Dorsolateral prefrontal cortex (tissue), 120 donors: ENCODE measurements at regions of chr2 and their contacts with region 1.

Region 1: DNA sequence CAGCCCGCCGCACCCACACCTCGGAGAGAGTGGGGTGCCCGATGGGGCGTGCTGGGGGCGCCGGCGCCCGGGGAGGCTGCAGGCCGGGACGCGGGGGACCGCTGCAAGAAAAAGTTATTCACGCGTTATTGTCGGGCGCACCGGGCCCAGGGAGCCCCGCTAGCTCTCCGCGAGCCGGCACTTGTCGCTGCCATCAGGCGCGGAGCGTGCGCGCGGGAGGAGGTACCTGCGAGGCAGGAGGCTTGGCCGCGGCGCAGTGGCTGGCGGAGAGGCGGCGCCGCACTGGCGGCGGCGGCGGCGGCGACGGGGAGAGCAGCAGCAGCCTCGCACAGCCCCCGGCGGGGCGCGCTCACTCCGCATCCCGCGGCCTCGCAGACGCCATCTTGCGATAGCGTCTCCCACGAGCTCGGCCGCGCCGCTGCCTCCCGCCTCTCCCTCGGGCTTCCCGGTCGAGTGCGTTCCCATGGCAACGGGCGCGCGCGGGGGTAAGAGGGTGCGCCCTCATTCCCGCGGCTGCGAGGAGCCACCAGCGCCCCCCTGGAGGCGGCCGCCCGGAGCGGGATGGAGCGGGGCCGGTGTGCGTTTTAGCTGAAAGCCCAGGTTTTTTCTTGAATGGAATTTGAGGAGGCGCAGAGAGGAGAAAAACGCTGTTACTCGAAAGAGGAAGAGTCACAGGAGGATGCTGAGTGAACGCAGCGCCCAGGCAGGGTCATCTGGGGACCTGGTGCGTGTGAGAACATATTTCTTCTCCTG is at the start of gene CHN1:
- DNase-seq: peak; percentile 70 to 92 (median 86)
- H3K4me3 ChIP-seq: peak within 1 kb of the TSS; percentile 53 to 97 (median 84)
- H3K27ac ChIP-seq: peak within 1 kb of the TSS in 55 of 59 donors; percentile 29 to 92 (median 83)
- H3K27me3 ChIP-seq: no peaks in the 10 kb centered on the region
- CTCF ChIP-seq: peak in 52 of 56 donors; percentile 2 to 73 (median 47)
- total RNA-seq, gene CHN1: 295 to 1,415 (median 1,032) TPM

Region 2: DNA sequence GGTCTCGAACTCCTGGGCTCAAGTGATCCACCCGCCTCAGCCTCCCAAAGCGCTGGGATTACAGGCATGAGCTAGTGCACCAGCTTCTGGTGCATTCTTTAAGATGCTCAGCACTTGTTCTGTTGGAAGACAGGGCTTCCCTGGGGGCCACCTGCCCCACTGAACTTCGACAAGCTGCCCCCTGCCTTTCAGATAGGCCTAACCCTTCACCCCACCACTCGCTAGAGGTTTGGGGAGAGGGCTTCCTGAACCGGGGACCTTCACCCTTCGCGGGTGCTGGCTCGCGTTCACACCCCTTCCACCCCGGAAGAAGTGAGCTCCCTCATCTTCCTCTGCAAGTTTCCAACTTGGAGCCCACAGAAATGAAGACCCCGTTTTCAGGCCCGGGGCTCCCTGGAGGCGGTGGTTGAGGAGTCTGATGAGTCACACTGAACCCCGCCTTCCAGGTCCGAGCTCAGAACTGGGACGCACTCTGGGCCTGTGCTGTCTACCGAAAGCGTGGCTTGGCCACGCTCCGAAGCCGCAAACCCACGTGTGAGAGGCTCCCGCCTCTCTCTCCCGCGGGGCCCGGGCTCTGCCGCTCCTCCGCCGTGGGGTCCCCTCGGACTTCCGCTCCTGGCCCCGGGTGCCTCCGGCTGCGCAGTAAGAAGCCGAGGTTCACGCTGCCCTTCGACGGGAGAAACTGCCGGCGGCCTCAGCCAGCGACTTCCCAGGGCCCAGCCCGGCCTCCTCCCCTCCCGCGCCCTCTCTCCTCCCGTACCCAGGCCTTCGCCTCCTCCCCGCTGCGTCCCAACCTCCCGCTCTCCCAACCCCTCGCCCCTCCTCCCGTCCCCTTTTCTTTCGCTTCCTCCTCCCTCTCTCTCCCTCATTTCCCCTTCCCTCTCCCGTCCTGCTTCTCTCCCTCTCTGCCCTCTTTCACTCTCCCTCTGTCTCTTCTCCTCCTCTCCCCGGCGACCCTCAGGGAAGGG is 992.5 kb before region 1 on chr2:
- intact Hi-C with region 1: no loop called
- DNase-seq: peak in 1 of 10 donors; percentile 53
- H3K4me3 ChIP-seq: peak overlapping the region; percentile 16 to 75 (median 60)
- H3K27ac ChIP-seq: peak overlapping the region in 57 of 59 donors; percentile 7 to 90 (median 71)
- H3K27me3 ChIP-seq: peaks cover 0 to 10% (median 0%) of the 10 kb centered on the region in 45 donors
- CTCF ChIP-seq: no peak

Region 3: GRCh38 chr2:175103191-175103590 is 98.0 kb after region 1 on chr2:
- intact Hi-C with region 1: loop called in 1 of 2 experiments (anchors 10 kb)
- DNase-seq: peak in 1 of 10 donors; percentile 5
- H3K4me3 ChIP-seq: no peak overlapping the region
- H3K27ac ChIP-seq: no peak overlapping the region
- H3K27me3 ChIP-seq: no peaks in the 10 kb centered on the region
- CTCF ChIP-seq: no peak

Region 4: GRCh38 chr2:175167792-175168563 is 162.8 kb after region 1 on chr2 and contains the start of gene ATF2:
- intact Hi-C with region 1: loop called (anchors 10 kb)
- DNase-seq: peak; percentile 74 to 98 (median 96)
- H3K4me3 ChIP-seq: peak within 1 kb of the TSS; percentile 49 to 100 (median 95)
- H3K27ac ChIP-seq: peak within 1 kb of the TSS; percentile 64 to 99 (median 94)
- H3K27me3 ChIP-seq: no peaks in the 10 kb centered on the region
- CTCF ChIP-seq: peak in 21 of 56 donors; percentile 3 to 34 (median 15)
- total RNA-seq, gene ATF2: 70.3 to 129 (median 104) TPM

Region 5: DNA sequence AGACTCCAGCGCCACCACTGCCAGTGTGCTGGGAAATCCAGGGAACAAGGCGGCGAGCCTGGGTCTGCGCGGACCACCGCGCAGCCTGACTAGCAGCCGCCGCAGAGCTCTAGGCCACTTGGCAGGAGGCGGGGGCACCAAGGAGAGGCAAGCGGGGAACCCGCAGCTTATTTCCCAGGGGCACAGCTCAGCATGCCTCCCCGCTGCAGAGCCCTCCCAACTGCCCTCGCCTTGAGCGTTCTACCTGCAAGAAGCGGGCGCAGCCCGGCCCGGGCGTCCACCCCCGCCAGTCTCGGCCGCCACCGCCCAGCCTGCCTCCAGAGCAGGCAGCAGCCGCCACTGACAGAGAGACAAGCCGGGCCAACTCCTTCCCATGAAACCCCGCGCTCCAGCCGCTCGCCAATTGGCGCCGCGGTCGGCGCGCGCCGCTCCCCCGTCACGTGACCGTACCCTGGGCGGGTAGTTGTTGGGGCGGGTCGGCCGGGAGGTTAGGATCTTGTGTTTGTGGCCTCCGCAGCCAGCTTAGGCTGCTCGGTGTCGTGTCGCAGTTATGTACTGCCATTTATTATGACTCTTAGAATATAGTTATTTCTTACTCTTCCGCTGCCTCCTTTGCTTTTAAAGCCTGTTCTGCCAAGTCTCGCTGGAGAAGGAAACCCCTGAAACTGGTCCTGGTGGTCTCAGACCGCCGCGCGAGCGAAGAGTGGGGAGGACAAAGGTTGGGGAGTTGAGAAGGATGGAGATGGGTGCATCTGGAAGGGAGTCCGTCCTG is 996.9 kb after region 1 on chr2 and contains the start of gene LNPK:
- intact Hi-C with region 1: loop called in 1 of 2 experiments (anchors 10 kb)
- DNase-seq: peak; percentile 88 to 96 (median 92)
- H3K4me3 ChIP-seq: peak within 1 kb of the TSS; percentile 60 to 97 (median 85)
- H3K27ac ChIP-seq: peak within 1 kb of the TSS; percentile 59 to 97 (median 89)
- H3K27me3 ChIP-seq: no peaks in the 10 kb centered on the region
- CTCF ChIP-seq: peak in 32 of 56 donors; percentile 1 to 64 (median 26)
- total RNA-seq, gene LNPK: 29.0 to 89.5 (median 60.4) TPM